Activated CD8-positive, alpha-beta T cell treated with anti-CD3 and anti-CD28 coated beads for 36 hours (primary cell): ENCODE measurements at regions of chr10 and their contacts with region 1.

Region 1: GRCh38 chr10:30687698-30688219 is 58.2 kb upstream of the LYZL2 start:
- DNase-seq: peak; percentile 87
- ATAC-seq: peak; percentile 64
- H3K4me3 Mint-ChIP-seq: no peak overlapping the region
- H3K27ac Mint-ChIP-seq: peak overlapping the region; percentile 7
- H3K4me1 Mint-ChIP-seq: peaks cover 37% of the 10 kb centered on the region
- H3K27me3 Mint-ChIP-seq: peaks cover 10% of the 10 kb centered on the region
- CTCF ChIP-seq: peak; percentile 94

Region 2: GRCh38 chr10:30510169-30510930 is 177.4 kb before region 1 on chr10:
- CTCF ChIA-PET with region 1: no interaction called
- POLR2A ChIA-PET with region 1: no interaction called
- intact Hi-C with region 1: no loop called
- DNase-seq: peak; percentile 73
- ATAC-seq: peak; percentile 95
- H3K4me3 Mint-ChIP-seq: no peak overlapping the region
- H3K27ac Mint-ChIP-seq: peak overlapping the region; percentile 13
- H3K4me1 Mint-ChIP-seq: peaks cover 24% of the 10 kb centered on the region
- H3K27me3 Mint-ChIP-seq: no peaks in the 10 kb centered on the region
- CTCF ChIP-seq: no peak

Region 3: GRCh38 chr10:30591249-30591670 is 96.5 kb before region 1 on chr10:
- CTCF ChIA-PET with region 1: no interaction called
- POLR2A ChIA-PET with region 1: no interaction called
- intact Hi-C with region 1: no loop called
- DNase-seq: peak; percentile 31
- ATAC-seq: peak; percentile 82
- H3K4me3 Mint-ChIP-seq: no peak overlapping the region
- H3K27ac Mint-ChIP-seq: no peak overlapping the region
- H3K4me1 Mint-ChIP-seq: no peaks in the 10 kb centered on the region
- H3K27me3 Mint-ChIP-seq: peaks cover 5% of the 10 kb centered on the region
- CTCF ChIP-seq: peak; percentile 74

Region 4: GRCh38 chr10:30701451-30702173 is 13.9 kb after region 1 on chr10:
- CTCF ChIA-PET with region 1: interaction called, 69 read pairs
- POLR2A ChIA-PET with region 1: interaction called, 7 read pairs
- intact Hi-C with region 1: no loop called
- DNase-seq: peak; percentile 94
- ATAC-seq: peak; percentile 77
- H3K4me3 Mint-ChIP-seq: peak overlapping the region; percentile 91
- H3K27ac Mint-ChIP-seq: peak overlapping the region; percentile 98
- H3K4me1 Mint-ChIP-seq: peaks cover 79% of the 10 kb centered on the region
- H3K27me3 Mint-ChIP-seq: no peaks in the 10 kb centered on the region
- CTCF ChIP-seq: no peak

Region 5: DNA sequence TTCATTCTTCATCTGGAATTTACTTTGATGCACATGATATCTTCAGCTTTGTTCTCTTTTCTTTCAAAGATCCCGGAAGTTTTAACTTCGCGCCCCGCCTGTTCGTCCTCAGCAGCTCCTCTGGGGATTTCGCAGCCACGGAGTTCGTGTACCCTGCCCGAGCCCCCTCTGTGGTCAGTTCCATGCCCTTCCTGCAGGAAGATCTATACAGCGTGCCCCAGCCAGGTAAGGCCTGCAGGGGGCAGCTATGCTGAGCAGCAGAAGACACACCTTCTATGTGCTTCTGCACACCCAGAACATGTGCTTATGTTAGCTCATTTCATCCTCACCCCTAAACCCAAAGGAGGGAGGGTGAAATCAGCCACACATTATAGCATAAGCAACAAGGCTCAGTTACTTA is 21.5 kb after region 1 on chr10:
- CTCF ChIA-PET with region 1: interaction called, 69 read pairs
- POLR2A ChIA-PET with region 1: interaction called, 7 read pairs
- intact Hi-C with region 1: no loop called
- DNase-seq: no peak
- ATAC-seq: no peak
- H3K4me3 Mint-ChIP-seq: no peak overlapping the region
- H3K27ac Mint-ChIP-seq: no peak overlapping the region
- H3K4me1 Mint-ChIP-seq: peaks cover 21% of the 10 kb centered on the region
- H3K27me3 Mint-ChIP-seq: no peaks in the 10 kb centered on the region
- CTCF ChIP-seq: peak; percentile 37

Region 6: GRCh38 chr10:30722956-30723620 is 35.3 kb after region 1 on chr10:
- CTCF ChIA-PET with region 1: interaction called, 119 read pairs
- POLR2A ChIA-PET with region 1: interaction called, 4 read pairs
- intact Hi-C with region 1: loop called (anchors 5 kb)
- DNase-seq: no peak
- ATAC-seq: no peak
- H3K4me3 Mint-ChIP-seq: no peak overlapping the region
- H3K27ac Mint-ChIP-seq: no peak overlapping the region
- H3K4me1 Mint-ChIP-seq: no peaks in the 10 kb centered on the region
- H3K27me3 Mint-ChIP-seq: no peaks in the 10 kb centered on the region
- CTCF ChIP-seq: no peak

Region 7: DNA sequence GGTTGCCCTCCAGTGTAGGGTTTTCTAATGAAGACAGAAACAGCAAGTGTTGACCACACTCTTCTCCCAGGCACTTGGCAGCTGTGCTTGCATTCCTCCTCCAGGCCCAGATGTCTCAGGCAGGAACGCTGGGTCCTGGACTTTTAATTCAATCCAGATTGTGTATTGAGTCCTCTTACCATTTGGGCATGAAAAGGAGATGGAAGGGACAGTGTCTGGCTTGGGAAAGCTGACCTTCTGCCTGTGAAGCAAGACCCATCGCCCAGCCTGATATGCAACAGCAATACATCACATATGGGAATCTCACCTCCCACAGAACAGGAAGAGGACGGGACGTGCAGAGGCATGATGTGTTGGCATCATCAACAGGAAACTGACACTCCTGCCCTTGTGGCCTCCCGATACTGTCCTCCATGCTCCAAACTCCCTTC is 116.1 kb after region 1 on chr10:
- CTCF ChIA-PET with region 1: no interaction called
- POLR2A ChIA-PET with region 1: no interaction called
- intact Hi-C with region 1: no loop called
- DNase-seq: no peak
- ATAC-seq: no peak
- H3K4me3 Mint-ChIP-seq: no peak overlapping the region
- H3K27ac Mint-ChIP-seq: no peak overlapping the region
- H3K4me1 Mint-ChIP-seq: peaks cover 11% of the 10 kb centered on the region
- H3K27me3 Mint-ChIP-seq: no peaks in the 10 kb centered on the region
- CTCF ChIP-seq: no peak

Region 8: GRCh38 chr10:30963992-30964930 is 276.5 kb after region 1 on chr10:
- CTCF ChIA-PET with region 1: no interaction called
- POLR2A ChIA-PET with region 1: no interaction called
- intact Hi-C with region 1: no loop called
- DNase-seq: peak; percentile 24
- ATAC-seq: peak; percentile 83
- H3K4me3 Mint-ChIP-seq: no peak overlapping the region
- H3K27ac Mint-ChIP-seq: peak overlapping the region; percentile 84
- H3K4me1 Mint-ChIP-seq: peaks cover 12% of the 10 kb centered on the region
- H3K27me3 Mint-ChIP-seq: no peaks in the 10 kb centered on the region
- CTCF ChIP-seq: no peak